ENCODE measurements at regions of chr20 and their contacts with region 1.

Region 1: DNA sequence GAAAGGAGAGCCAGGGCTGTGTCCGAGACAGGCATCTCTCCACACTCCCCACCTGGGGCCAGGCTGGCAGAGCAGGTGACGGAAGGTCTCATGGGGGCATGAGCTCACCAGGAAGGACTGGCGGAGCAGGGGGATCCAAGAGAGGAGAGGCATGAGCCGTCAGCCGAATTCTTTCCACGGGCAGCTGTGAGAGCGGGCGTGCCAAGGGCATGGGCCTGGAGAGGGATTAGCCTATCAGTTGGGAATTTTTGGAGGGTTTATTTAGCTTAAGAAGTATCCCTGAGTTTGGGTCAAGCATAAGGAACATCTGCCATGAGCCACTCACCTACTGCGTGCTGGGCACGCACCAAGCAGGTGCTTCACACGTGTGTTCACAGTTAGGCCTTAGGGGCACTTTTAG is 60.2 kb upstream of the ZNFX1 start:
- DNase-seq: no peak
- H3K4me3 ChIP-seq: no peak overlapping the region
- H3K4me3 Mint-ChIP-seq: no peak overlapping the region
- H3K27ac ChIP-seq: no peak overlapping the region
- H3K27ac Mint-ChIP-seq: no peak overlapping the region
- H3K4me1 ChIP-seq: no peaks in the 10 kb centered on the region
- H3K4me1 Mint-ChIP-seq: peaks cover 0 to 5% (median 2%) of the 10 kb centered on the region in 4 donors
- H3K27me3 ChIP-seq: no peaks in the 10 kb centered on the region
- H3K27me3 Mint-ChIP-seq: peaks cover 3 to 7% of the 10 kb centered on the region in 2 donors

Region 2: GRCh38 chr20:49484180-49485140 is 146.4 kb after region 1 on chr20:
- CTCF ChIA-PET with region 1: interaction called, 8 read pairs
- POLR2A ChIA-PET with region 1: no interaction called
- intact Hi-C with region 1: loop called (anchors 1 kb)
- DNase-seq: peak; percentile 46 to 60 (median 58)
- H3K4me3 ChIP-seq: peak overlapping the region in 1 of 2 donors; percentile 44
- H3K4me3 Mint-ChIP-seq: peak overlapping the region; percentile 83 to 91 (median 89)
- H3K27ac ChIP-seq: no peak overlapping the region
- H3K27ac Mint-ChIP-seq: peak overlapping the region in 4 of 7 donors; percentile 6 to 38 (median 22)
- H3K4me1 ChIP-seq: peaks cover 14% of the 10 kb centered on the region
- H3K4me1 Mint-ChIP-seq: peaks cover 4 to 10% (median 7%) of the 10 kb centered on the region in 4 donors
- H3K27me3 ChIP-seq: peaks cover 21% of the 10 kb centered on the region
- H3K27me3 Mint-ChIP-seq: peaks cover 41 to 55% of the 10 kb centered on the region in 2 donors

Region 3: GRCh38 chr20:49508435-49509199 is 170.6 kb after region 1 on chr20:
- CTCF ChIA-PET with region 1: interaction called, 4 read pairs
- POLR2A ChIA-PET with region 1: no interaction called
- intact Hi-C with region 1: loop called (anchors 1 kb)
- DNase-seq: peak in 4 of 5 donors; percentile 16 to 30 (median 22)
- H3K4me3 ChIP-seq: no peak overlapping the region
- H3K4me3 Mint-ChIP-seq: peak overlapping the region in 3 of 8 donors; percentile 48 to 63 (median 53)
- H3K27ac ChIP-seq: no peak overlapping the region
- H3K27ac Mint-ChIP-seq: peak overlapping the region in 1 of 7 donors; percentile 68
- H3K4me1 ChIP-seq: no peaks in the 10 kb centered on the region
- H3K4me1 Mint-ChIP-seq: peaks cover 4 to 5% (median 4%) of the 10 kb centered on the region in 4 donors
- H3K27me3 ChIP-seq: peaks cover 5% of the 10 kb centered on the region
- H3K27me3 Mint-ChIP-seq: peaks cover 40 to 42% of the 10 kb centered on the region in 2 donors

Region 4: DNA sequence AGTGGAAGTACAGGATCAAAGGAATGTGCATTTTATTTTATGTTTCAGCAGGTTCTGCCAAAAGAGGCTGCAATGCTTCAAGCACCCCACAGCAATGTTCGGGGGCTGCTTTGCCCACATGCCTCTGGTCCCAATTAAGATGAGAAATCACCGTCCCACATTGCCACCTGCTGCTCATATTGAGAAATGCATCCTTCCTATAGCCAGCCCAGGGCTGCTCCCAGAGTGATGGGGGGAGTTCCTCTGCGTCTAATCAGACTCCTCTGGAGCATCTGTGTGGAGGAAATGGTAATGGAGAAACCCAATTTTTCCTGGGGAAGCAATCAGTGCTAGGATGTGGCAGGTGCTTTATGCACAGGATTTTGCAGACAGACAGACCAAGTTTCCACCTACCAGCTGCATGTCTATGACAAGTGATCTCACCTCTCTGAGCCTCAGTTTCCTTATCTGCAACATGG is 196.2 kb after region 1 on chr20:
- CTCF ChIA-PET with region 1: interaction called, 8 read pairs
- POLR2A ChIA-PET with region 1: no interaction called
- intact Hi-C with region 1: loop called (anchors 1 kb)
- DNase-seq: peak; percentile 39 to 54 (median 43)
- H3K4me3 ChIP-seq: no peak overlapping the region
- H3K4me3 Mint-ChIP-seq: peak overlapping the region in 2 of 8 donors; percentile 40 to 61
- H3K27ac ChIP-seq: no peak overlapping the region
- H3K27ac Mint-ChIP-seq: peak overlapping the region in 1 of 7 donors; percentile 18
- H3K4me1 ChIP-seq: peaks cover 11% of the 10 kb centered on the region
- H3K4me1 Mint-ChIP-seq: peaks cover 4 to 15% (median 11%) of the 10 kb centered on the region in 4 donors
- H3K27me3 ChIP-seq: no peaks in the 10 kb centered on the region
- H3K27me3 Mint-ChIP-seq: peaks cover 2 to 6% of the 10 kb centered on the region in 2 donors

Region 5: DNA sequence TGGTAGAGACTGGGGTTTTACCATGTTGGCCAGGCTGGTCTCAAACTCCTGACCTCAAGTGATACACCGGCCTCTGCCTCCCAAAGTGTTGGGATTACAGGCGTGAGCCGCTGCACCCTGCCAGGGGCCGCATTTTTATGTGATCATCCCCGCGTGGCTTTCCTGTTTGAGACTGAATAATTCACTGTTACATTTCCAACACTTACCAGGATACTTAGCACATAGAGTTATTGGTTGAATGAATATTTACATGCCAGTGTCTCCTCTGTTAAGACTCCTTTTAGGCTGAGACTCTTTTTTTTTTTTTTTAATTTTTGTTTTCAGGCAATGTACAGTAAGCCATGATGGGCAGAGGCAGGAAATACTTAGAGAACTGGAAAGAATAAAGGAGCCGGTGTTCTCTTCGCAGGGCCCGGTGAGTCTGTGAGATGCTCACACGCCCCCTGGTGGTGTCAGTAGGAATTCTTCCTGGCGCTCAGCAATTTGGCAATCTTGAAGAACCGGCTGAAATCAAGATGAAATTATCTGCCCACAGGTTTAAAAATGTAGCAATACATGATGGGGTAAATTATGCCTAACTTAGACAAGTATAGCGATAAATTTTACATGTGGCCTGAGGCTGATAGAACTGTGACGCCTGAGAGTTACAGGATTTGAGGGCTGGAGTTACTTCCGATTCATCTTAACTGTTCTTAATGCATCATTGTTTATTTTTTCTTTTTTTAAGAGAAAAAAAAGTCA is 590.5 kb after region 1 on chr20:
- CTCF ChIA-PET with region 1: no interaction called
- POLR2A ChIA-PET with region 1: interaction called, 3 read pairs
- intact Hi-C with region 1: loop called (anchors 2 kb)
- DNase-seq: peak; percentile 77 to 79 (median 78)
- H3K4me3 ChIP-seq: no peak overlapping the region
- H3K4me3 Mint-ChIP-seq: peak overlapping the region in 4 of 8 donors; percentile 16 to 60 (median 44)
- H3K27ac ChIP-seq: no peak overlapping the region
- H3K27ac Mint-ChIP-seq: peak overlapping the region in 6 of 7 donors; percentile 5 to 81 (median 37)
- H3K4me1 ChIP-seq: no peaks in the 10 kb centered on the region
- H3K4me1 Mint-ChIP-seq: peaks cover 1 to 5% (median 4%) of the 10 kb centered on the region in 4 donors
- H3K27me3 ChIP-seq: no peaks in the 10 kb centered on the region
- H3K27me3 Mint-ChIP-seq: peaks cover 1% of the 10 kb centered on the region in 2 donors

Measured in CD4-positive, alpha-beta memory T cell (primary cell).